CD14-positive monocyte (primary cell): ENCODE measurements at regions of chr4 and their contacts with region 1.

Region 1: DNA sequence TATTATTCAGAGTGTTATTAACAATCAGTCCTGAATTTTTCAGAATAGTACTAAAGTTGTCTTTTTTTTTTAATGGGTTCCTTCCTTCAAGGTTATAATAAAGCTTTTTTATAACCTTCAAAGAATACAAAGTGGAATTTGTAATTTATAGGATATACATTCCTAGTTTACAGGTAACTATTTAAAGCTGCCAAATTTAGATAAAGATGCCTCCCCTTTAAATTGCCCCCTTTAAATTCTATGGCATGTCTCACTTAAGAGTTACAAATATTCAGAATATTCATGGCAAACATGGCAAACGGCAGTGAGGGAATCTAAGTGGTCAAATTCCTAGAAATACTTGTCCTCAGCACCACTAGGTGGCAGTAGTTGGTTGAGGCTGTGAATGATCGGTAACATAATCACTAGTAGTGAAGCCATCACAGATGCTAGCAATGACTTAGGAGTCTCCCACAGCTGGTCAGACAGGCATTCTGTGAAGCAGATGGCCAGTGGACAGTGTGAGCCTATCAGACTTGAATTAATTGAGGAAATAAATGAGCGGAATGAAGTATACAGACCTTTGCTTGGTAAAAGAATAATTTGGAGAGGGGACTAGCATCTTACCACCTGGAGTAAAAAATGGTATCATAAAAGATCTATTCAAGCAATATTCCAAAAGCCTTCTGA is 86.4 kb downstream of the CBR4 start:
- DNase-seq: peak; percentile 44 to 63 (median 57)
- H3K4me3 ChIP-seq: no peak overlapping the region
- H3K4me3 Mint-ChIP-seq: no peak overlapping the region
- H3K27ac ChIP-seq: no peak overlapping the region
- H3K27ac Mint-ChIP-seq: no peak overlapping the region
- H3K4me1 ChIP-seq: no peaks in the 10 kb centered on the region
- H3K4me1 Mint-ChIP-seq: peaks cover 2% of the 10 kb centered on the region
- H3K27me3 ChIP-seq: no peaks in the 10 kb centered on the region
- H3K27me3 Mint-ChIP-seq: no peaks in the 10 kb centered on the region
- CTCF ChIP-seq: peak; percentile 86

Region 2: GRCh38 chr4:168550071-168550766 is 373.4 kb before region 1 on chr4:
- intact Hi-C with region 1: no loop called
- DNase-seq: no peak
- H3K4me3 ChIP-seq: no peak overlapping the region
- H3K4me3 Mint-ChIP-seq: no peak overlapping the region
- H3K27ac ChIP-seq: no peak overlapping the region
- H3K27ac Mint-ChIP-seq: no peak overlapping the region
- H3K4me1 ChIP-seq: no peaks in the 10 kb centered on the region
- H3K4me1 Mint-ChIP-seq: peaks cover 3% of the 10 kb centered on the region
- H3K27me3 ChIP-seq: no peaks in the 10 kb centered on the region
- H3K27me3 Mint-ChIP-seq: no peaks in the 10 kb centered on the region
- CTCF ChIP-seq: no peak

Region 3: GRCh38 chr4:168710353-168710946 is 213.2 kb before region 1 on chr4:
- intact Hi-C with region 1: loop called (anchors 5 kb)
- DNase-seq: peak in 2 of 3 donors; percentile 27 to 51
- H3K4me3 ChIP-seq: no peak overlapping the region
- H3K4me3 Mint-ChIP-seq: no peak overlapping the region
- H3K27ac ChIP-seq: no peak overlapping the region
- H3K27ac Mint-ChIP-seq: no peak overlapping the region
- H3K4me1 ChIP-seq: peaks cover 0 to 12% of the 10 kb centered on the region in 2 donors
- H3K4me1 Mint-ChIP-seq: peaks cover 16% of the 10 kb centered on the region
- H3K27me3 ChIP-seq: no peaks in the 10 kb centered on the region
- H3K27me3 Mint-ChIP-seq: peaks cover 0 to 3% (median 2%) of the 10 kb centered on the region in 3 donors
- CTCF ChIP-seq: peak; percentile 71

Region 4: DNA sequence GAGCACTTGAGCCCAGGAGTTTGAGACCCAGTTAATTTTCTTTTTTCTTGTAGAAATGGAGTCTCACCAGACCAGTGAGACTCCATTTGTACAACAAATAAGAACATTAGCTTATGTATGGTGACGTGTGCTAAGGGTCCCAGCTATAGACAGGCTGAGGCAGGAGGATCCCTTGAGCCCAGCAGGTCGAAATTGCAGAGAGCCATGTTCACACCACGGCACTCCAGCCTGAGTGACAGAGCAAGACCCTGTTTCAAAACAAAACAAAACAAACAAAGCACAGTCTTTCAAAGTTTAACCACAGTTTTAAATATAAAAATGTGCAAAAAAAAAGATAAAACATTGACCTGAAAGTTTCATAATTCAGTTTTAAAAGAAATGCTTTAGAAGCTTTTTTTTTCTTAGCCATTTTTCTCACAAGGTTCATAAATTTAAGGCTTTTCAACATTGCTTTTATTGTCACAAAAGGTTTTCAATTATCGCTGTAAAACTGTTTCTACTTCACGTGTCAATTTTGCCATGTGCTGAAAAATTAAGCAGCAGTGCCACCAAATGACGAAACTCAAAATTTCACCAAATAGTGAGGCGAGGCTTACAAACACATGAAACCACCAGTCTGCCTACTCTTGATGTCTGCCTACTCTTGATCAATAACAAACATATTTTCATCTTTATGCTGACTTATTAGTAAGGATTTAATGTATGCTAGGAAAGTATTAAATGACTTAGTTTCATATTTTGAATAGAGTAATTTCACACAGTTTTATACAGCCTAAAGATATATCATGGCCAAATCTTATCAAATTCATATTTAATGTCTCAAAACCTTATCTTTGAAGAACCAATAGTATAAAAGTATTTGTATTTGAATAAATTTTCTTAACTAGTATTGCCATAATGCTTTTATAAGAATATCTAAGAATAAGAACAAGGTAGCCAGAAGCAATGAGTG is 562.4 kb after region 1 on chr4:
- intact Hi-C with region 1: loop called (anchors 5 kb)
- DNase-seq: peak; percentile 12 to 30 (median 25)
- H3K4me3 ChIP-seq: no peak overlapping the region
- H3K4me3 Mint-ChIP-seq: no peak overlapping the region
- H3K27ac ChIP-seq: no peak overlapping the region
- H3K27ac Mint-ChIP-seq: no peak overlapping the region
- H3K4me1 ChIP-seq: no peaks in the 10 kb centered on the region
- H3K4me1 Mint-ChIP-seq: peaks cover 1% of the 10 kb centered on the region
- H3K27me3 ChIP-seq: no peaks in the 10 kb centered on the region
- H3K27me3 Mint-ChIP-seq: no peaks in the 10 kb centered on the region
- CTCF ChIP-seq: peak; percentile 62

Region 5: DNA sequence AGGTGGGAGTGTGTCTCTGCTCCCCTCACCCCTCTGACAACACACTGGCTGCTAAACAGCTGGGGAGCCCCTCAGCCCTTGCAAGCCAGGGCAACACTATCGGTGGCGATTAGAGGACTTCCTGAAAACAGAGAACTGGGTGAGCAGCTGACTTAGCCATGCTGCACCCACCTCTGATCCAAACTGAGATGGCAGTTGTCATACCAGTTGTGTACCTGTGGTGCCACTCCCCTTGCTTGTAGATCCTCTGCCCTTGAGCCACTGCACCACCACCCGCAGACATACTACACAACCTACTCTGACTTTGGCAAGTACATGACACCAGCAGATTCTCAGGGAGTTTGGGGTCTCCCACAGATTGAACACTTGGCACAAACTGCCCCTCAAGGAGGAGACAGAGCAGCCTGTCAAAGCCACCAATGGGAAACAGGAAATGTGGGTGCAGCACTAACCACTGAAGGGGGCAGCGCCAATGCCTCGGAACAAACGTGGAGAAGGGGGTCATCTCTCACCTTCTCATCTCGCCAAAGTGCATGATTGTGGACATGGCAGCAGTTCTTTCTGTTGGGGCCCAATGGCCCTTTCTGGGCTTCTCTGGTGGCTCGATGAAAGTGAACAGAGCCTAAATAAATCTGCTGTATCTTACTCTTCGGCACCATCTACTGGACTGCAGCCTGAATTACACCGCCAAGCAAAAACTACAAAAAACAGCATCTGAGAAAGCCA is 568.9 kb after region 1 on chr4:
- intact Hi-C with region 1: loop called (anchors 5 kb)
- DNase-seq: peak; percentile 7 to 19 (median 8)
- H3K4me3 ChIP-seq: no peak overlapping the region
- H3K4me3 Mint-ChIP-seq: no peak overlapping the region
- H3K27ac ChIP-seq: no peak overlapping the region
- H3K27ac Mint-ChIP-seq: no peak overlapping the region
- H3K4me1 ChIP-seq: no peaks in the 10 kb centered on the region
- H3K4me1 Mint-ChIP-seq: peaks cover 4% of the 10 kb centered on the region
- H3K27me3 ChIP-seq: no peaks in the 10 kb centered on the region
- H3K27me3 Mint-ChIP-seq: no peaks in the 10 kb centered on the region
- CTCF ChIP-seq: peak; percentile 85